Activated CD8-positive, alpha-beta T cell treated with anti-CD3 and anti-CD28 coated beads, Interleukin-2, amount 10 ng/mL, durations not matched to agents 7 days and 5 days (primary cell): ENCODE measurements at regions of chr20 and their contacts with region 1.

Region 1: DNA sequence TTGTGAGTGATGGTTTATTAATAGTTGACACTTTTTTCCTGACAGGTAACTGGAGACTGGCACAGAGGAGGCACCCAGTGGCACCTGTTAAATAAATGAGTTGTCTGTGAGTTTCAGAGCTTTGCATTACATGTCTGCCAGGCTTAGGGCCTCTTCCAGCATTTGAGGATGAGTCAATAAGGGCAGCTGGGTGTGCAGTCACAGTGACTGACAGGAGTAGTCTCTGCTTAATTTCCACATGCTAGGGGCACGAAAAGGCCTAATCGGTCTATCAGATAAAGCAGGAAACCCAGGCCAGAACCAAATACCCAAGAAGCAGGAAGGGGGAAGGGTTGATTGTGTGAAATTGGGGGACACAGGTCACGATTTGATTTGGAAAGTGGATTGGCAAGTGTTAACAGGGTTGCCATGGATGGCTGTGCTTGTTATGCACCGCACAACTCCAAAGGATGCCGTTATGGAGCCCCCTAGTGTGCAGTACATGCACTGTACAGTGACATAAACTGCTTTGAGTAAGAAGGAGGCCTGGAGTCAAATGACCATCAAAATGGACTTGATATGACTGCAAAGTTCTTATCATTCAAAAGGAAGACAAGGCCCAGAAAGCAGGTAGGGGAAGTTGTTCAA is 111.9 kb upstream of the GGTLC1 start:
- DNase-seq: peak; percentile 79
- ATAC-seq: peak; percentile 95
- H3K4me3 Mint-ChIP-seq: no peak overlapping the region
- H3K27ac Mint-ChIP-seq: peak overlapping the region; percentile 14
- H3K4me1 Mint-ChIP-seq: peaks cover 22% of the 10 kb centered on the region
- H3K27me3 Mint-ChIP-seq: peaks cover 10% of the 10 kb centered on the region

Region 2: GRCh38 chr20:23937303-23938117 is 163.0 kb before region 1 on chr20:
- CTCF ChIA-PET with region 1: interaction called, 36 read pairs
- POLR2A ChIA-PET with region 1: no interaction called
- DNase-seq: peak; percentile 73
- ATAC-seq: peak; percentile 85
- H3K4me3 Mint-ChIP-seq: no peak overlapping the region
- H3K27ac Mint-ChIP-seq: no peak overlapping the region
- H3K4me1 Mint-ChIP-seq: no peaks in the 10 kb centered on the region
- H3K27me3 Mint-ChIP-seq: peaks cover 4% of the 10 kb centered on the region

Region 3: GRCh38 chr20:23971310-23971709 is 129.2 kb before region 1 on chr20:
- CTCF ChIA-PET with region 1: no interaction called
- POLR2A ChIA-PET with region 1: no interaction called
- DNase-seq: no peak
- ATAC-seq: no peak
- H3K4me3 Mint-ChIP-seq: no peak overlapping the region
- H3K27ac Mint-ChIP-seq: no peak overlapping the region
- H3K4me1 Mint-ChIP-seq: no peaks in the 10 kb centered on the region
- H3K27me3 Mint-ChIP-seq: peaks cover 7% of the 10 kb centered on the region

Region 4: DNA sequence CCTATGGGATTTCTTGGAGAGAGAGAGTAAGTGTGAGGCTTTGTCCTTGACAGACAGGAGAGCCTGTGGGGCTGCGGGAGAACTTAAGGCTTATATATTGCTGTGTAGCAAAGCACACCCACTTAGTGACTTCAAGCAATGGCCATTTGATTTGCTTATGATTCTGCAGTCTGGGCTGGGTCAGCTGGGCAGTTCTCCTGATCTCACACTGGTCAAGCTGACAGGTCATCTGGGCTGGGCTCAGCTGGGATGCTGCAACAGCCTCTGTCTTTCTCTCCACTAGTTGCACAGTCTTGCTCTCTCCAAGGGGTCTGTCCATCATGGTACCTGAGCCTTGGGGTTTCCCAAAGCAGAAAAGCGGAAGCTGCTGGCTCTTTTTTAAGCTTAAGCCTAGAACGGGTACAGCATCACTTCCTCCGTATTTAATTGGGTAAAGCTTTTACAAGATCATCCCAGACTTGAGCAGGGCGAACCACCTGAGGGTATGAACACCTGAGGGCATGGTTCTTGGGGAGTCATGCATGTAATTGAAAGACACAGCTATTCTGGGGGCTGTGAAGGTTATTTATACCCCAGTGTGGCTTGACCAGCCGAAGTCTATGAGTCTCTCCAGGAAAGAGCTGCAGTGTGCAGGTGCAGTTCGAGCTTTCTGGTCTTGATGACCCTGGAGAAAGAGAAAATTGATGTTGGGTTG is 98.6 kb before region 1 on chr20:
- CTCF ChIA-PET with region 1: interaction called, 18 read pairs
- POLR2A ChIA-PET with region 1: no interaction called
- DNase-seq: no peak
- ATAC-seq: no peak
- H3K4me3 Mint-ChIP-seq: no peak overlapping the region
- H3K27ac Mint-ChIP-seq: no peak overlapping the region
- H3K4me1 Mint-ChIP-seq: no peaks in the 10 kb centered on the region
- H3K27me3 Mint-ChIP-seq: peaks cover 22% of the 10 kb centered on the region

Region 5: GRCh38 chr20:24066076-24066700 is 34.3 kb before region 1 on chr20:
- CTCF ChIA-PET with region 1: interaction called, 18 read pairs
- POLR2A ChIA-PET with region 1: no interaction called
- DNase-seq: peak; percentile 51
- ATAC-seq: peak; percentile 53
- H3K4me3 Mint-ChIP-seq: no peak overlapping the region
- H3K27ac Mint-ChIP-seq: peak overlapping the region; percentile 23
- H3K4me1 Mint-ChIP-seq: peaks cover 11% of the 10 kb centered on the region
- H3K27me3 Mint-ChIP-seq: peaks cover under 1% of the 10 kb centered on the region

Region 6: DNA sequence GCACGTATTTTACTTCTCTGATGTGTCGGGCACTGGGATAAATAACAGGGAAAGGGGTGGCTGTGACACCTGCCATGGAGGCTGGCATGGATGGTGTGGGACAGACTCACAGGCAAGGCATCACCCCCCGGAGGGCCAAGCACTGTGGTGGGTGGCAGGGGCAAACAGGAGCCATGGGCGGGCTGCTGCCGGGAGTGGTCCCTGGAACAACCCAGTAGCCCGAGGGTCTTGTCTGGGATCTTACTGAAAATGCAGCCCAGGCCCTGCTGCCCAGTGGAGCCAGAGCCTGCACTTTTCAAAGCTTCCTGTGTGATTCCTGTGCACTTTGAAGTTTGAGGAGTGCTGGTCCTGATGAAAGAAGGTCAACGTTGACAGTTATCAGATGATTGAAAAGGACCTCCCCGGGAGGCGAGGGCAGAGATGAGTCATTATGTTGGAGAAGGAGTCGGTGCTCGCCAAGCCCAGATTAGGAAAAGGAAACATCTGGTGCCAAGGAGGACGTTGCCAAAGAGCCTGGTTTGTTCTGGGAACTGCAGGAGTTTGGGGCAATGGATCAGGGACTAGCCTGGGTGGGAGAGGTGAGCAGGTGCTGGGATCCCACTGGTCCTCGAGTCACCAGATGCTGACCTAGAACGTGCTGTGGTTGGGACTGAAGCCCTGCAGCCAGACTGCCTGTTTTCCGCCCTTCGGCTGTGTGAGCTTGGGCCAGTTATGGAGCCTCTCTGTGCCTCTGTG is 18.1 kb after region 1 on chr20:
- CTCF ChIA-PET with region 1: interaction called, 10 read pairs
- POLR2A ChIA-PET with region 1: no interaction called
- DNase-seq: no peak
- ATAC-seq: no peak
- H3K4me3 Mint-ChIP-seq: no peak overlapping the region
- H3K27ac Mint-ChIP-seq: no peak overlapping the region
- H3K4me1 Mint-ChIP-seq: no peaks in the 10 kb centered on the region
- H3K27me3 Mint-ChIP-seq: peaks cover 21% of the 10 kb centered on the region

Region 7: DNA sequence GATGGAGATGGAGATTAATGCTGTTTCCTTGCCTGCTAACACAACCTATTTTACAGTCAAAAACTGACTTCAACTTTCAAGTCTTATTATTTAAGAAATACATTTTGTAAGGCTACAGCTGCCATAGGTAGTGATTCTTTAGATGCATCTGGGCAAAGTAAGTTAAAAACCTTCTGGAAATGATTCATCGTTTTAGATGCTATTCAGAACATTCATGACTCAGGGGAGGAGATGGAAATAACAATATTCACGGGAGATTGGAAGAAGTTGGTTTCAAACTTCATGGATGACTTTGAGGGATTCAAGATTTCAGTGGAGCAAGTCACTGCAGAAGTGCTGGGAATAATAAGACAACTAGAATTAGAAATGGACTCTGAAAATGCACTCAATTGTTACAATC is 63.0 kb after region 1 on chr20:
- CTCF ChIA-PET with region 1: interaction called, 13 read pairs
- POLR2A ChIA-PET with region 1: no interaction called
- DNase-seq: no peak
- ATAC-seq: no peak
- H3K4me3 Mint-ChIP-seq: no peak overlapping the region
- H3K27ac Mint-ChIP-seq: no peak overlapping the region
- H3K4me1 Mint-ChIP-seq: peaks cover 2% of the 10 kb centered on the region
- H3K27me3 Mint-ChIP-seq: no peaks in the 10 kb centered on the region

Region 8: GRCh38 chr20:24535941-24536730 is 435.6 kb after region 1 on chr20:
- CTCF ChIA-PET with region 1: no interaction called
- POLR2A ChIA-PET with region 1: no interaction called
- DNase-seq: no peak
- ATAC-seq: no peak
- H3K4me3 Mint-ChIP-seq: no peak overlapping the region
- H3K27ac Mint-ChIP-seq: no peak overlapping the region
- H3K4me1 Mint-ChIP-seq: no peaks in the 10 kb centered on the region
- H3K27me3 Mint-ChIP-seq: peaks cover 3% of the 10 kb centered on the region

Region 9: DNA sequence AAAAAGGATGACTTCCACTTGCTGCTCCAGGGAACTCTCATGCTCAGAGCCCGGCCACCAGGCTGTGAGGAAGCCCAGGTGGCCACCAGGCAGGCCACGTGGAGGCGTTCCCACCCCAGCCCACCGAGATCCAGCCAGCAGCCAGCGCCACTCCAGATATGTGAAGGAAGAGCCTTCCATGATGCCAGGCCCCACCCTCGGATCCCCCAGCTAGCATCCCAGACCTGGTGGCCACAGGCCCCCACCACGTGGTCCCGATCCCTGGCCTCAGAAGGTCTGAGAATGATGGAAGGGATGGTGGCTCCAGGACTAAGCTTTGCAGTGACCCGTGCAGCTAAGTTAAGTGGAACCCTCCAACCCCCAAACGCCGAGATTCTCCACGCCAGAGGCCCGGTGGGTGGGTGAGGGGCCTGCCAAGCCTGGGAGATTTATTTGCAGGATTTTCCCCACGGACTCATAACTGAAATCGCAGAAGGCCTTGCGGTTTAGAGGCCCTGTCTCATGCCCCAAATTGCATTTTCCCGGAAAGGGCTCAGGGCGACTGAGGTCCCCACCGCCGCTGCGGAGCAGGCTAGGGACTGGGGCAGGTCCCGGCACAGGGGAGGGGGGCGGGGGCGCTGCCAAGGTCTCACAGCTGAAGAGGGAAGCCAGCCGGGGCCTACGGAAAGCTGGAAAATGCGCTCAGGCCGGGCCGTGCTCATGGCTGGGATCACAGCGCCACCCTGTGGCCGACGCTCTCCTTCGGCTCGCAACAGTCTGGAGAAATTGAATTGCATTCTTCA is 817.5 kb after region 1 on chr20:
- CTCF ChIA-PET with region 1: interaction called, 12 read pairs
- POLR2A ChIA-PET with region 1: no interaction called
- DNase-seq: peak; percentile 62
- ATAC-seq: peak; percentile 71
- H3K4me3 Mint-ChIP-seq: no peak overlapping the region
- H3K27ac Mint-ChIP-seq: no peak overlapping the region
- H3K4me1 Mint-ChIP-seq: peaks cover 10% of the 10 kb centered on the region
- H3K27me3 Mint-ChIP-seq: no peaks in the 10 kb centered on the region